ENCODE measurements at regions of chr19 and their contacts with region 1.

Region 1: GRCh38 chr19:4576016-4576933 is 16.8 kb upstream of the SEMA6B start:
- DNase-seq: no peak
- H3K4me3 ChIP-seq: no peak overlapping the region
- H3K27me3 ChIP-seq: peaks cover 16% of the 10 kb centered on the region
- CTCF ChIP-seq: peak; percentile 75

Region 2: GRCh38 chr19:4597975-4598671 is 21.8 kb after region 1 on chr19:
- CTCF ChIA-PET with region 1: interaction called, 14 read pairs
- POLR2A ChIA-PET with region 1: no interaction called
- DNase-seq: no peak
- H3K4me3 ChIP-seq: peak overlapping the region; percentile 23
- H3K27me3 ChIP-seq: peaks cover 15% of the 10 kb centered on the region
- CTCF ChIP-seq: no peak

Region 3: DNA sequence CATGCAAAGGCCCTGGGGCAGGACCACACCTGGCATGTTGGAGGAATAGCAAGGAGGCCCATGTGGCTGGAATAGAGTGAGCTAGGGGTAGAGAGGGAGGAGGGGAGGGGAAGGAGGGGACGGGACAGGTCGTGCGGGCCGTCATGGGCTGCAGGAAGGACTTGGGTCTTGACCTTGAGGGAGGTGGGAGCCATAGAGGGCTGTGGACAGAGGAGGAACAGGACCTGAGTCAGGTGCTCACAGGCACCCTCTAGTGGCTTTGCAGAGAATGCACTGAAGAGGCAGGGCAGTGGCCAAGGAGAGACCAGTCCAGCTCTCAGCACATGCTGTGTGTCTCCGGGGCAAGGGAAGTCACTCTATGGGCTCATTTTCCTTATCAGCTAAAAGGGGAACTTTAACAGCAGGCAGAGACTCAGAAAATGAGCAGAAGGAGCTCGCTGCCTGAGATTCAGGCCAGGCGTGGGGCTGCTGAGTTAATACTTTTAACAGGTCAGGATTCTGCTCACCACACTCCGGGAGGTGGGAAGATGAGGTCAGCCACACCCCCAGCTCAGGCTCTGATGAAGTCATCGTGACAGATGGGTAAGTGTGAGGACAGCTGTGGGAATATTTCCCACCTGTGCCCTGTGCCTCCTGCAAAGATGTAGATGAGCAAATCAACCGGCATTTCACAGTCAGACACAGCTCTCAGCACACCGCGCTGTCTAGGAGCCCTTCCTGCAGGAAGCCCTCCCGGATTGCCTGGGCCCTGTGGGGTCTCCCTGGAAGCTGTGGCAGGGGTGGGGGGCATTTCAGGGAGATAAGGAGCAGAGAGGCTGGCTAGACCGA is 57.1 kb after region 1 on chr19:
- CTCF ChIA-PET with region 1: interaction called, 119 read pairs
- POLR2A ChIA-PET with region 1: no interaction called
- DNase-seq: no peak
- H3K4me3 ChIP-seq: no peak overlapping the region
- H3K27me3 ChIP-seq: no peaks in the 10 kb centered on the region
- CTCF ChIP-seq: peak; percentile 90